ENCODE measurements at regions of chr5 and their contacts with region 1.

Region 1: DNA sequence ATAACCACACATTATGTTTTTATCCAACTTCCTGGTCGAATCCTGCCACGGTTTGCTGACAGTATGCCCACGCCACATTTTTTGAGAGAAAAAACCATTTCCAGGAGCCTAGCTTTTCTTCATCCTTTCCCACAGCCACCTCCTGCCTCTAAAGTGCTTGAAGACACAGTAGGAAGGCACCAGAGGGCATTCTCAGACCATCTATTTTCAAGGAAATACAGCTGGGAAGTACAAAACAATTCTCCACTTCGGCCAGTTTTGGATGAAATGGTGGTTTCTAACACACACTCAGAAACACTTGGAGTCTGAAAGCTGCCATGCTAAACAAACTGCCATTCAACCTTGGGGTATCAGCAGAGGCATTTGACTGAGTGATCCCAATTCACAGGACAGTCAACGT is 86.3 kb upstream of the RPS23 start:
- DNase-seq: peak; percentile 53
- H3K4me3 Mint-ChIP-seq: no peak overlapping the region
- H3K27ac Mint-ChIP-seq: peak overlapping the region; percentile 87
- H3K4me1 Mint-ChIP-seq: peaks cover 23% of the 10 kb centered on the region
- H3K27me3 Mint-ChIP-seq: no peaks in the 10 kb centered on the region
- CTCF ChIP-seq: peak; percentile 55

Region 2: DNA sequence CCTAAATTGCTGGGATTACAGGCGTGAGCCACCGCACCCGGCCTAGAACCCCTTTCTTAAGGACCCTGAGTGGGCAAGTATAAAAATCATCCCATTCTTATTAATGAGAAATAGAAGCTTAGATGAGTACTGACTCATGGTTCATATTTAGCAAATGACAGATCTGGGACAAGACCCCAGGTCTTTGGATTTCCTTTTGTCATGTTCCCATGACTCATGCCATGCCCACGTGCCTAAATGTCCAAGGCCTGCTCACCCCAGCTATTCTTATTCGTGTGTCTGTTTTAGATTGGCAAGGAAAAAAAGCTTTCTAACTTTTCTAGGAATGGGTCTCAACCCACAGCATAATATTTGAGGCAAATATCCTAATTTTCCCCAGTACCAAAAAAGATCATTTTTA is 28.7 kb before region 1 on chr5:
- CTCF ChIA-PET with region 1: no interaction called
- intact Hi-C with region 1: no loop called
- DNase-seq: no peak
- H3K4me3 Mint-ChIP-seq: no peak overlapping the region
- H3K27ac Mint-ChIP-seq: no peak overlapping the region
- H3K4me1 Mint-ChIP-seq: no peaks in the 10 kb centered on the region
- H3K27me3 Mint-ChIP-seq: no peaks in the 10 kb centered on the region
- CTCF ChIP-seq: no peak

Region 3: GRCh38 chr5:82387001-82387818 is 22.7 kb after region 1 on chr5:
- CTCF ChIA-PET with region 1: interaction called, 11 read pairs
- intact Hi-C with region 1: no loop called
- DNase-seq: peak; percentile 62
- H3K4me3 Mint-ChIP-seq: no peak overlapping the region
- H3K27ac Mint-ChIP-seq: peak overlapping the region; percentile 50
- H3K4me1 Mint-ChIP-seq: peaks cover 42% of the 10 kb centered on the region
- H3K27me3 Mint-ChIP-seq: peaks cover 15% of the 10 kb centered on the region
- CTCF ChIP-seq: no peak

Region 4: DNA sequence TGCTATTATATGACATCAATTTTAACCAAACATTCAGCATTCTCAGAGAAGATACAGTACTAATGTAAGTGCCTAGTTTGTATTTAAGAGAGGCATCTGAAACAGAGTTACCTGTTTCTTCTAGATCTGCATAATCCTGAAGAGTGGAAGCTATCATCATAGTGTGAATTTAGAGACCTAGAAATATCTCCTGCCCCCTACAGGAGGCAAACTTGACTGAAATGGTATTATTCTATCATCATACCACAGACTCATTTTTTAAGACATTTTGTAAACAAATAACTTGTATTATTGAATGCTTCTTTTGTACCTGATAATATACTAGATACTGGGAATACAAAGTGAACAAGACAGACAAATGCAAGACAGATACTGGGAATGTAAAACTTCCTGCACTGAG is 130.4 kb after region 1 on chr5:
- CTCF ChIA-PET with region 1: interaction called, 6 read pairs
- intact Hi-C with region 1: loop called (anchors 2 kb)
- DNase-seq: no peak
- H3K4me3 Mint-ChIP-seq: no peak overlapping the region
- H3K27ac Mint-ChIP-seq: no peak overlapping the region
- H3K4me1 Mint-ChIP-seq: no peaks in the 10 kb centered on the region
- H3K27me3 Mint-ChIP-seq: no peaks in the 10 kb centered on the region
- CTCF ChIP-seq: peak; percentile 18

Region 5: GRCh38 chr5:82641331-82642003 is 277.0 kb after region 1 on chr5:
- CTCF ChIA-PET with region 1: interaction called, 13 read pairs
- intact Hi-C with region 1: no loop called
- DNase-seq: peak; percentile 79
- H3K4me3 Mint-ChIP-seq: no peak overlapping the region
- H3K27ac Mint-ChIP-seq: peak overlapping the region; percentile 76
- H3K4me1 Mint-ChIP-seq: peaks cover 39% of the 10 kb centered on the region
- H3K27me3 Mint-ChIP-seq: no peaks in the 10 kb centered on the region
- CTCF ChIP-seq: peak; percentile 47

Region 6: GRCh38 chr5:83069096-83069799 is 704.8 kb after region 1 on chr5:
- CTCF ChIA-PET with region 1: no interaction called
- intact Hi-C with region 1: loop called (anchors 10 kb)
- DNase-seq: no peak
- H3K4me3 Mint-ChIP-seq: no peak overlapping the region
- H3K27ac Mint-ChIP-seq: no peak overlapping the region
- H3K4me1 Mint-ChIP-seq: peaks cover 66% of the 10 kb centered on the region
- H3K27me3 Mint-ChIP-seq: no peaks in the 10 kb centered on the region
- CTCF ChIP-seq: no peak